ENCODE measurements at regions of chr10 and their contacts with region 1.

Region 1: DNA sequence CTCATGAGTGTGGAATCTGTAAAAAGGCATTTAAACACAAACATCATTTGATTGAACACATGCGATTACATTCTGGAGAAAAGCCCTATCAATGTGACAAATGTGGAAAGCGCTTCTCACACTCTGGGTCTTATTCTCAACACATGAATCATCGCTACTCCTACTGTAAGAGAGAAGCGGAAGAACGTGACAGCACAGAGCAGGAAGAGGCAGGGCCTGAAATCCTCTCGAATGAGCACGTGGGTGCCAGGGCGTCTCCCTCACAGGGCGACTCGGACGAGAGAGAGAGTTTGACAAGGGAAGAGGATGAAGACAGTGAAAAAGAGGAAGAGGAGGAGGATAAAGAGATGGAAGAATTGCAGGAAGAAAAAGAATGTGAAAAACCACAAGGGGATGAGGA is 207.7 kb downstream of the ZEB1 start:
- DNase-seq: no peak
- ATAC-seq: no peak
- H3K4me3 ChIP-seq: no peak overlapping the region
- H3K4me3 Mint-ChIP-seq: no peak overlapping the region
- H3K27ac ChIP-seq: no peak overlapping the region
- H3K27ac Mint-ChIP-seq: no peak overlapping the region
- H3K4me1 ChIP-seq: no peaks in the 10 kb centered on the region
- H3K4me1 Mint-ChIP-seq: no peaks in the 10 kb centered on the region
- H3K27me3 ChIP-seq: no peaks in the 10 kb centered on the region
- H3K27me3 Mint-ChIP-seq: no peaks in the 10 kb centered on the region
- CTCF ChIP-seq: no peak

Region 2: DNA sequence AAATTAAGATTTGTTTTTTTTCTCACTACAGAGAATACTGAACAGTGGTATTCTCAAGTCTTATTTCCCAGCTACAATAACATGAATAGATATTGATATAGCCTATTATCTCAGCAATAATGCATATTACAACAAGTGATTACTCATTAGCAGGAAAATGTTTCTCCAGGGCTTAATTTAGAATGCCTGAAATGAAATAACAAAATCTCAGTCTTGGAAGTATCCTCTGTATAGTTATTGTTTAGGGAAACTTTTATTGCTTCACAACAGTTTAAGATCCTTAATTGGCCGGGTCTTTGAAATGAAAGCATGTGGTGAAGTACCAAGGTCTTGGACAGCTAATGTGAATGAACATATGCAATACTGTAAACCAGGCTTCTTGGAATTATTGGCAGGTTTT is 286.7 kb before region 1 on chr10:
- CTCF ChIA-PET with region 1: no interaction called
- POLR2A ChIA-PET with region 1: no interaction called
- intact Hi-C with region 1: no loop called
- DNase-seq: no peak
- ATAC-seq: no peak
- H3K4me3 ChIP-seq: no peak overlapping the region
- H3K4me3 Mint-ChIP-seq: no peak overlapping the region
- H3K27ac ChIP-seq: no peak overlapping the region
- H3K27ac Mint-ChIP-seq: no peak overlapping the region
- H3K4me1 ChIP-seq: no peaks in the 10 kb centered on the region
- H3K4me1 Mint-ChIP-seq: no peaks in the 10 kb centered on the region
- H3K27me3 ChIP-seq: no peaks in the 10 kb centered on the region
- H3K27me3 Mint-ChIP-seq: no peaks in the 10 kb centered on the region
- CTCF ChIP-seq: no peak

Region 3: GRCh38 chr10:31456468-31456867 is 70.2 kb before region 1 on chr10:
- CTCF ChIA-PET with region 1: no interaction called
- POLR2A ChIA-PET with region 1: no interaction called
- intact Hi-C with region 1: no loop called
- DNase-seq: no peak
- ATAC-seq: no peak
- H3K4me3 ChIP-seq: no peak overlapping the region
- H3K4me3 Mint-ChIP-seq: no peak overlapping the region
- H3K27ac ChIP-seq: no peak overlapping the region
- H3K27ac Mint-ChIP-seq: no peak overlapping the region
- H3K4me1 ChIP-seq: no peaks in the 10 kb centered on the region
- H3K4me1 Mint-ChIP-seq: peaks cover 22% of the 10 kb centered on the region
- H3K27me3 ChIP-seq: no peaks in the 10 kb centered on the region
- H3K27me3 Mint-ChIP-seq: no peaks in the 10 kb centered on the region
- CTCF ChIP-seq: no peak

Region 4: GRCh38 chr10:31728698-31729224 is 202.1 kb after region 1 on chr10:
- CTCF ChIA-PET with region 1: no interaction called
- POLR2A ChIA-PET with region 1: no interaction called
- intact Hi-C with region 1: no loop called
- DNase-seq: no peak
- ATAC-seq: no peak
- H3K4me3 ChIP-seq: no peak overlapping the region
- H3K4me3 Mint-ChIP-seq: no peak overlapping the region
- H3K27ac ChIP-seq: no peak overlapping the region
- H3K27ac Mint-ChIP-seq: no peak overlapping the region
- H3K4me1 ChIP-seq: no peaks in the 10 kb centered on the region
- H3K4me1 Mint-ChIP-seq: no peaks in the 10 kb centered on the region
- H3K27me3 ChIP-seq: peaks cover 0 to 10% (median 8%) of the 10 kb centered on the region in 4 experiments
- H3K27me3 Mint-ChIP-seq: peaks cover 3% of the 10 kb centered on the region
- CTCF ChIP-seq: no peak

Region 5: GRCh38 chr10:31770307-31770902 is 243.7 kb after region 1 on chr10:
- CTCF ChIA-PET with region 1: interaction called, 4 read pairs
- POLR2A ChIA-PET with region 1: no interaction called
- intact Hi-C with region 1: loop called (anchors 10 kb)
- DNase-seq: peak; percentile 61
- ATAC-seq: peak; percentile 94
- H3K4me3 ChIP-seq: no peak overlapping the region
- H3K4me3 Mint-ChIP-seq: no peak overlapping the region
- H3K27ac ChIP-seq: no peak overlapping the region
- H3K27ac Mint-ChIP-seq: no peak overlapping the region
- H3K4me1 ChIP-seq: no peaks in the 10 kb centered on the region
- H3K4me1 Mint-ChIP-seq: no peaks in the 10 kb centered on the region
- H3K27me3 ChIP-seq: no peaks in the 10 kb centered on the region
- H3K27me3 Mint-ChIP-seq: no peaks in the 10 kb centered on the region
- CTCF ChIP-seq: peak; percentile 95